Panc1 (cell line): ENCODE measurements at regions of chrX and their contacts with region 1.

Region 1: DNA sequence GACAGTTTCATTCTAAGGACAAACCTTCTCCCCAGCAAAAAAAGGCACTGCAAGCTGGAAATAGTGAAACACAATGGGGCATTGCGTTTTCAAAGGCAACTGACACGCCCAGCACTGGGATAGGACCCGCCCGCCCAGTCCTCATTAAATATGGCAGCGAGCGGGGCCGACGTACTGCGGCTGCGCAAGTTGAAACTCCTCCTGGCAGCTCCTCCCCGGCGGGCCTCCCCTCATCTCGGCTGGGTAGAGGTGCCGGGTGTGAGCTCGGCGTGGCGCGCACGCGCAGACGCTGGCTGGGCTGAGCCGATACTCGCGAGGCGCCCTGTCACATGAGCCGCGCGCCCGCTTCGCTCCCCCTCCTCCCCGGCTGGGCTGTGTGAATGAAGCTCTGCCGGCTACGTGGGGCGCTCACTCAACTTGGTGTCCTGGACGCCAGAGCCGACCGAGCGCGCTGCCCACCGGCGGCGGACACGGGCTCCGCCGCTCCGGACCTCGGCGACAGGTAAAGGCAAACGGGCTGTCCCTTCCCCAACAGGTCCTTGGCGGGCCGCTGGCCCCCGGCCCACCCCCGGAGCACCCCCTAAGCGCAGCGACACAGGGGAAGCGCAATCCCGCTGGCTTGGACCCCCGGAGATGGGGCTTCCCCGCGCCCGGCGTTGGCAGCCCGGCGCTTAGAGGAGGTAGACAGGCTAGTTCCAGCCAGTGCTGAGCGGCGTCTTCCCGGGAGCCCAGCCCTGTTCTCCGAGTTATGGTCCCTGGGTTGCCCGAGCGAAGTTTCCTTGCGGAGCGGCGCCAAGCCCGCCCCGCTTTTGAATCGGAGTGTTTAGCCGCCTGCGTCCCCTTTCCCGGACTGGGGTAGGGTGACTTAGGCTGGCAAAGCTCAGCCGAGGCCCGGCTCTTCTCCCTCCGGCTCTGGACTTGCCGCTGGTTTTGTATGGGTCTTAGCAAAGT is at the start of gene CLCN5:
- DNase-seq: peak; percentile 64
- ATAC-seq: peak; percentile 99
- H3K4me3 ChIP-seq: peak within 1 kb of the TSS; percentile 70 to 90
- H3K27ac ChIP-seq: peak within 1 kb of the TSS; percentile 88
- H3K4me1 ChIP-seq: peaks cover 3% of the 10 kb centered on the region; the same call in 1 of the 2 replicates
- H3K27me3 ChIP-seq: no peaks in the 10 kb centered on the region
- CTCF ChIP-seq: no peak
- total RNA-seq, gene CLCN5: 23.6 TPM

Region 2: GRCh38 chrX:49695276-49696180 is 227.0 kb before region 1 on chrX and contains the start of gene PAGE1:
- CTCF ChIA-PET with region 1: no interaction called
- POLR2A ChIA-PET with region 1: no interaction called
- in situ Hi-C with region 1: no loop called
- intact Hi-C with region 1: no loop called
- DNase-seq: no peak
- ATAC-seq: no peak
- H3K4me3 ChIP-seq: no peak within 1 kb of the TSS
- H3K27ac ChIP-seq: no peak within 1 kb of the TSS
- H3K4me1 ChIP-seq: no peaks in the 10 kb centered on the region
- H3K27me3 ChIP-seq: no peaks in the 10 kb centered on the region
- CTCF ChIP-seq: peak; percentile 25; the same call in 1 of the 2 replicates
- total RNA-seq, gene PAGE1: not detected

Region 3: DNA sequence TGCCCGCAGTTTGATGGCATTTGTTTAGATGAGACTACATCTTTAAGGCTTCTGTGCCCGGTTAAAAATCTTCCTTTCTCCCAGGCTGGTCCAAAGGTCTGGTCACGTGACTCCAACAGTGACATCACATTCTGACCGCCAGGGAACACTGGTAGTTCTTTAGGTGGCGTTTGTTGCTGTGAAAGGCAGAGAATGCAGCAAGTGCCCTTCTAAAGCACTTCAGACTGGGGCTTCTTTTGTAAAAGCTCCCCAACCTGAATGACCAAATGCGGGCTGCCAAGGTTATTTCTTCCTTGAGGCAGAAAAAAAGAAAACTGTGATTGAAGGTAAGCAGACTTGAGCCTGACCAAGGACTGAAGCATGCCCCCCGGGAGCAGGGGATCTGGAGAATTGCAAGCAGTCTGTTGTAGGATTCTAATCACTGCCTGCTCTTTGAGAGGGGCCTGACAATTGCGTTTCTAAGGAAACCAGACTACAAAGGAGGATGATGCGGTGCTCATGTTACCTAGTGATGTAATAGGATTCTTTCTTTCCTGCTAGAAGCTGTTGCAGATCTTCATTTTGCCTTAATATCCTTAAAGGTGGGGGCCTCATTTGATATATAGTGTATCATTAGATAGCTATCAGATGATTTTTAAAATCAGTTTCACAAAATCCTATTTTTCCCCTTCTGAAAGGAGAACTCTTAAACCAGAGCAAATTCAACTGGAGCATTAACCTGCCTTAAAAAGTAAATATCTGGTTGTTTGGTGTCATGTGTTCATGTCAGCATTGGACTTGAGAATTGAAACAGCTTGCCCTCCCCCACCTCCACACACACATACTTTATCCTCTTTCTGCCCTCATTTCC is 145.1 kb after region 1 on chrX:
- CTCF ChIA-PET with region 1: no interaction called
- POLR2A ChIA-PET with region 1: no interaction called
- in situ Hi-C with region 1: no loop called
- intact Hi-C with region 1: loop called (anchors 5 kb)
- DNase-seq: no peak
- ATAC-seq: no peak
- H3K4me3 ChIP-seq: peak overlapping the region in 1 of 2 experiments; percentile 3; a peak in 1 of 4 replicates
- H3K27ac ChIP-seq: no peak overlapping the region
- H3K4me1 ChIP-seq: no peaks in the 10 kb centered on the region
- H3K27me3 ChIP-seq: no peaks in the 10 kb centered on the region
- CTCF ChIP-seq: no peak